ENCODE measurements at regions of chr19 and their contacts with region 1.

Region 1: GRCh38 chr19:12806239-12807081 is at the start of gene RNASEH2A:
- DNase-seq: peak; percentile 66 to 93 (median 85)
- ATAC-seq: peak; percentile 92
- H3K4me3 ChIP-seq: peak within 1 kb of the TSS; percentile 60 to 68
- H3K4me3 Mint-ChIP-seq: peak within 1 kb of the TSS; percentile 92
- H3K27ac ChIP-seq: peak within 1 kb of the TSS; percentile 54 to 63
- H3K27ac Mint-ChIP-seq: peak within 1 kb of the TSS; percentile 78
- H3K4me1 ChIP-seq: peaks cover 18% of the 10 kb centered on the region
- H3K4me1 Mint-ChIP-seq: peaks cover 26% of the 10 kb centered on the region
- H3K27me3 ChIP-seq: no peaks in the 10 kb centered on the region
- H3K27me3 Mint-ChIP-seq: no peaks in the 10 kb centered on the region
- CTCF ChIP-seq: no peak
- total RNA-seq, gene RNASEH2A: 1.3 to 2.2 TPM

Region 2: DNA sequence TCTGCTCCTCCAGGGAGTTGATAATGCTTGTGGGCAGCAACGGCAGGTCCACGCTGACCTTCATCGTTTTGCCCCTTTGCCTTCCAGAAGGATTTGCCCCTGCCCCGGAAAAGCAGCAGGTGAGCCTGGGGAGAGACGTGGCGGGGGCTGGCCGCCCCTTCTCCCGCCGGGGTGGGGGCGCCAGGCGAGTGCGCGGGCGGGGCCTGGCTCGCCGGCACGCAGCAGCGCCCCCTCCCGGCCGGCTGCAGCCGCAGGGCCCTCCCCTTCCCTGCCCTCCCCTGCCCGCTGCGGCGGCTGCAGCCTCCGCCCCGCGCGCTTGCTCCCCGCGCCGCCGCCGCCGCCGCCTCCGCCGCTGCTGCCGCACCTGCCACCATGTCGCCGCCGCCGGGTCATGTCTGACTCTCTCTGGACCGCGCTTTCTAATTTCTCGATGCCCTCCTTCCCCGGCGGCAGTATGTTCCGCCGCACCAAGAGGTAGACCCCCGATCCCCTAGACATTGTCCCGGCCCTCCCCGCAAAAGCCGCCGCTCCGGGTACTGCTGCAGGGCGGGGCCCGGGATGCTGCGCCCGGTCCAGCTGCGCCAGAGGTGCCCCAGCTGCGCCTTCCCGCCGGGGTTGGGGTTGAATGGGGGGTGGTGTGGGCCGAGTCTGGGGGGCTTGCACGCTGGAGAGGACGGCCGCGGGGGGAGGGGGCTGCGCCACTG is 31.9 kb after region 1 on chr19 and contains the start of gene MAST1:
- CTCF ChIA-PET with region 1: interaction called, 3 read pairs
- POLR2A ChIA-PET with region 1: no interaction called
- intact Hi-C with region 1: loop called in 1 of 2 experiments (anchors 2 kb)
- DNase-seq: peak in 7 of 9 experiments; percentile 19 to 77 (median 55)
- ATAC-seq: peak; percentile 64
- H3K4me3 ChIP-seq: peak within 1 kb of the TSS in 1 of 2 experiments; percentile 34
- H3K4me3 Mint-ChIP-seq: peak within 1 kb of the TSS; percentile 65
- H3K27ac ChIP-seq: no peak within 1 kb of the TSS
- H3K27ac Mint-ChIP-seq: no peak within 1 kb of the TSS
- H3K4me1 ChIP-seq: peaks cover 26% of the 10 kb centered on the region
- H3K4me1 Mint-ChIP-seq: peaks cover 35% of the 10 kb centered on the region
- H3K27me3 ChIP-seq: peaks cover 57 to 63% of the 10 kb centered on the region in 2 experiments
- H3K27me3 Mint-ChIP-seq: peaks cover 74% of the 10 kb centered on the region
- CTCF ChIP-seq: peak; percentile 34
- total RNA-seq, gene MAST1: 0.64 to 1.1 TPM

Region 3: DNA sequence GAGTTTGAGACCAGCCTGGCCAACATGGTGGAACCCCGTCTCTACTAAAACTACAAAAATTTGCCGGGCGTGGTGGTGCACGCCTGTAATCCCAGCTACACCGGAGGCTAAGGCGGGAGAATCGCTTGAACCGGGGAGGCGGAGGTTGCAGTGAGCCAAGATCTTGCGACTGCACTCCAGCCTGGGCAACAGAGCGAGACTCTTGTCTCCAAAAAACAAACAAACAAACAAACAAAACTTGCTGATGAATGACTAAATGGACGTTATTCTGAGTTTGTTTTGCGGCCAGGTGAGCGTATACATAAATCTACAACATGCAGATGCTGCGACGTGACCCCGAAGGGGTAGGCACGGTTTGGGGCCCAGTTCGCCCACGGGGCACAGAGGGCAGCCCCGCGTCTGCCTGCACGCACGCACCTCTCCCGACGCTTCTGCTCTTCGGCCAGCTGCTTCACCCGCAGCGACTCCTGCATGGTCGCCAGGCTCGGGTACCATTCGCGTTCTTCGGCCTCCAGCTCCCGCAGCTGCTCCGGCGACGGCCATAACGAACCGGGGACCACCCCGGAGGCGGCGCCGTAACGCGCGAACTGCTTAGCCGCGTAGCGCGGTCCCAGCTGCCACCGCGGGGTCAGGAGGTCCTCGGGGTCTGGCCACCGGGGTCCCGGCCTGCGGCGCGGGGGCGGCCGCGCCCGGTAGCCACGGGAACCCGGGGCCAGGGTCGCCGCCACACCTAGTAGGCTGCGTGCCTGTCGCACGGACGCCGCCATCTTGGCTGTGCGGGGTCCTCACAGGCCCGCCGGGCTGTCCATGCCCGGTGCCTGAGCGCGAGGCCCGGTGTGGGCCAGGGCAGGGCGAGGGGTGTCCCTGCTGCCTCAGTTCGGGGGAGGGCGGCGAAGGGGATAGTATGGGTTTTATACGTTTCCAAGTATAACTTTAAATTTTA is 150.3 kb after region 1 on chr19 and contains the start of gene GADD45GIP1:
- CTCF ChIA-PET with region 1: no interaction called
- POLR2A ChIA-PET with region 1: no interaction called
- intact Hi-C with region 1: loop called in 1 of 2 experiments (anchors 1 kb)
- DNase-seq: peak; percentile 68 to 88 (median 77)
- ATAC-seq: peak; percentile 99
- H3K4me3 ChIP-seq: peak within 1 kb of the TSS; percentile 84 to 86
- H3K4me3 Mint-ChIP-seq: peak within 1 kb of the TSS; percentile 83
- H3K27ac ChIP-seq: peak within 1 kb of the TSS; percentile 70 to 78
- H3K27ac Mint-ChIP-seq: peak within 1 kb of the TSS; percentile 91
- H3K4me1 ChIP-seq: peaks cover 13% of the 10 kb centered on the region
- H3K4me1 Mint-ChIP-seq: peaks cover 29% of the 10 kb centered on the region
- H3K27me3 ChIP-seq: no peaks in the 10 kb centered on the region
- H3K27me3 Mint-ChIP-seq: no peaks in the 10 kb centered on the region
- CTCF ChIP-seq: no peak
- total RNA-seq, gene GADD45GIP1: 13.2 to 14.4 TPM

Measured in CD8-positive, alpha-beta T cell (primary cell).